Mammary epithelial cell (primary cell): ENCODE measurements at regions of chr17 and their contacts with region 1.

Region 1: DNA sequence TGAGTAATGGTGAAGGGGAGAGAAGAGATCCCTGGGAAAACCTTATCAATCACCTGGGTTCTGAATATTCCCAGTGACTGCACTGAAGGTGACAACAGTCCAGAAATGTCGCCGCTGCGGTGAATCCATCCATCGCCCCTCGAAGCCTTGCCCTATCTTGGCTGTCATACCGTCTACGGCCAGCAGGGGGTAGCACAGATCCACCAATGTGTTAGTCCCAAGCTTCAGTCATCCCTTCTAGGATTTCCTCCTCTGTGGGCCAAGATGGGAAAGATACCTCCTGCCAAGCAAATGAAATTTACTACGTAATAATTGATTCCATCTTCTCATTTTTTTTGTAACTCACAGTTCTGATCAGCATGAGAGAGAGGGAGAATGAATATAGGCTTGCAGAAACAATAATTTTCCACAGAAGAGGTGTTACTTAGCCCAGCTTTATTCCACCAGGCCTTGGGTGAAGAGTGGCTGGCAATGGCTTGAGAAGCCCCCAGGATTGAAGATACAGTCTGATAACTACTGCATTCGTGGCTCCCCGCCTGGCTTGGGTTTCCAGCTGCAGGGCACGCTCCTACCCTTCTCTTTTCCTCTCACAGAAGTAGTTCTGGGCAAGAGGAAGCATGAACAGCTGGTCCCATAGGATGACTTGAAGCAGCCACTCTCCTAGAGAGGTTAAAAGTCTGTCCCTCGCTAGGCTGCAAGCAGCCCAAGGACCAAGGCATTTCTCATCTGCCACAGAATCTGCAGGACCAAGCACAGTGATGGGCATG is 2.6 kb upstream of the FMNL1 start:
- DNase-seq: peak; percentile 55
- H3K4me3 ChIP-seq: no peak overlapping the region
- H3K27ac ChIP-seq: no peak overlapping the region
- H3K4me1 ChIP-seq: peaks cover 9% of the 10 kb centered on the region
- H3K27me3 ChIP-seq: no peaks in the 10 kb centered on the region
- CTCF ChIP-seq: peak; percentile 84 to 93

Region 2: GRCh38 chr17:45235416-45236281 is 16.6 kb after region 1 on chr17:
- CTCF ChIA-PET with region 1: interaction called, 20 read pairs
- dilution Hi-C with region 1: no loop called
- in situ Hi-C with region 1: no loop called
- intact Hi-C with region 1: loop called (anchors 1 kb)
- DNase-seq: peak; percentile 41
- H3K4me3 ChIP-seq: no peak overlapping the region
- H3K27ac ChIP-seq: no peak overlapping the region
- H3K4me1 ChIP-seq: peaks cover 10% of the 10 kb centered on the region
- H3K27me3 ChIP-seq: no peaks in the 10 kb centered on the region
- CTCF ChIP-seq: peak; percentile 85 to 86

Region 3: DNA sequence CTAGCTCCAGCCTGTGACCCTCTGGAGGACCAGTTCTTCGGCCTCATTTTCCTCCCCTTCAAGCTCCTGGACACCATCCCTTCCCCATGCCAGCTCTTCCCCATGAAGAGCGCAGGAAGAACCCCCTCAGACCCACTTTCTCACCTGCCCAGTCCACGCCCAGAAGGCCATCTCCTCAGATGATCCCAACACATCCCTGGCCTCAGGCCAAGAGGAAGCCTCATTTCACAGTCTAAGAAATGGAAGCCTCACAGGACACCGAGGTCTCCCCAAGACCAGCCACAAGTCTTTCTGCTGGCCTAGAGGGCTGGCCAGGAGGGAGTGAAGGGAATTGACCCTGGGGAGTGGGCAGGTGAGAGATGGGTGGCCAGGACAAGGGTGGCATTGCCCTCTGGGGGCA is 34.8 kb after region 1 on chr17:
- CTCF ChIA-PET with region 1: interaction called, 11 read pairs
- dilution Hi-C with region 1: no loop called
- in situ Hi-C with region 1: no loop called
- intact Hi-C with region 1: no loop called
- DNase-seq: no peak
- H3K4me3 ChIP-seq: no peak overlapping the region
- H3K27ac ChIP-seq: no peak overlapping the region
- H3K4me1 ChIP-seq: peaks cover 1% of the 10 kb centered on the region
- H3K27me3 ChIP-seq: no peaks in the 10 kb centered on the region
- CTCF ChIP-seq: no peak

Region 4: DNA sequence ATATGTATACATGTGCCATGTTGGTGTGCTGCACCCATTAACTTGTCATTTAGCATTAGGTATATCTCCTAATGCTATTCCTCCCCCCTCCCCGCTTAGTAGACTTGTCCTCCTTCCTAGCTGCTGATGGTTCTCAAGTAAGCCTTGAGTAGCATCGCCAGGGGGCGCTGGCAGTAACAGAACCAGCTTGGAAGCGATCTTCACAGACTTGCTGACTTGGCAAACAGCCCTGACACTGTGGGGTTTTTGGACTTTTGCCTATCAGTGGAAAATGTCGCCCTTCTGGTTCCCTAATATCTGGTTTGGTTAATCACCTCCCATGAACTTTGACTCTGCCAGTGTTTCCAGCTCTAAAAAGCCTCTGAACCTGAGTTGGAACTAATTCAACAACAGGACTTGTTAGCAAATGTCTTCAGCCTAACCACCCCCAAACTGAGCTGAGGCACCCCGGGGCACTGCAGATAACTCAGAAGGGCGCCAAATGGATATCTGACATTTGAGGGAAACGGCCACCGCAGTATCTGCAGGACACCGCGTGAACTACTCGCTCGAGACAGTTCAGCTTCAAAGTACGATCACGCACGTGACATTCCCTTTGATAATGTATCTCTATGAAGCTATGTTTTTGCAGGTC is 58.3 kb after region 1 on chr17:
- CTCF ChIA-PET with region 1: interaction called, 3 read pairs
- dilution Hi-C with region 1: no loop called
- in situ Hi-C with region 1: no loop called
- intact Hi-C with region 1: loop called (anchors 1 kb)
- DNase-seq: peak; percentile 72
- H3K4me3 ChIP-seq: no peak overlapping the region
- H3K27ac ChIP-seq: no peak overlapping the region
- H3K4me1 ChIP-seq: no peaks in the 10 kb centered on the region
- H3K27me3 ChIP-seq: no peaks in the 10 kb centered on the region
- CTCF ChIP-seq: peak; percentile 79 to 83

Region 5: GRCh38 chr17:45428050-45428617 is 209.1 kb after region 1 on chr17:
- CTCF ChIA-PET with region 1: no interaction called
- dilution Hi-C with region 1: no loop called
- in situ Hi-C with region 1: no loop called
- intact Hi-C with region 1: loop called (anchors 1 kb)
- DNase-seq: peak; percentile 63
- H3K4me3 ChIP-seq: no peak overlapping the region
- H3K27ac ChIP-seq: no peak overlapping the region
- H3K4me1 ChIP-seq: peaks cover 29% of the 10 kb centered on the region
- H3K27me3 ChIP-seq: no peaks in the 10 kb centered on the region
- CTCF ChIP-seq: peak; percentile 85 to 97

Region 6: GRCh38 chr17:45834471-45835396 is 615.7 kb after region 1 on chr17:
- CTCF ChIA-PET with region 1: no interaction called
- dilution Hi-C with region 1: no loop called
- in situ Hi-C with region 1: no loop called
- intact Hi-C with region 1: loop called (anchors 5 kb)
- DNase-seq: no peak
- H3K4me3 ChIP-seq: no peak overlapping the region
- H3K27ac ChIP-seq: no peak overlapping the region
- H3K4me1 ChIP-seq: no peaks in the 10 kb centered on the region
- H3K27me3 ChIP-seq: no peaks in the 10 kb centered on the region
- CTCF ChIP-seq: no peak